PC-9 (cell line): ENCODE measurements at regions of chr1 and their contacts with region 1.

Region 1: DNA sequence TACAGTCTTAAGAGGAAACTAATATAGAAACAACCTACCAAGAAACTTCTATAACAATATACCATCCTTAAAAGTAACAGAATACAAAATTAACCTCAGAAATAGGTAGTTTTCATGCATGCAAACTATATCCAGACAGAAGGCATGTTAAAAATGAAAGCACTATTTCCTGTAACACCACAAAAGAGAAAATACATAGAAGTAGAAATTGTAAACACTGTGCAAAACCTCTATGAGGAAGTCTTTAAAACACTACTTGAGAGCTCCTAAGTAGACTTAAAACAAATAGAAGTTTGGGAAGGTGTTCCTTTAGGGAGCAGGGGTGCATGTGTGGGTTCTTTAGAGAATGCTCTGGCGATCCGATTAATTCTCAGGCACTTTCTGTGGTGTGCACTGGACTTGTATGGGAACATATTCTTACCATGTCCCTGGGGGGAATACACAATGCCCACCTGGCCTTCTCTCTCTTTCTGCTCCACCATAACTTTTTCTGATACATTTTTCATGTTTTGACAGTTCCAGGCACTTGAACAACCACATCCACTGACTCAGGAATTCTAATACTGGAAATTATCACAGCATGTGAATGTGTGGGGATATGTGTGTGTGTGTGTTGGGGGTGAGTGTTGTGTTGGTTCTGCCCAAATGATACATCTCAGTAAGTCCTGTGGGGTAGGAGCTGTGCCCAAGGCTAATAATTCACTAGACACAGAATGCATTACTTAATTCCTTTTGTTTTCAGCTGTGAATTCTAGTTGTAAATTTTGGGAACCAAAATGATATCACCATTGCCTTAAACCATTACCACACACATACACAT is 866.3 kb upstream of the B3GALT2 start:
- DNase-seq: no peak
- H3K4me3 ChIP-seq: no peak overlapping the region
- H3K27ac ChIP-seq: no peak overlapping the region
- H3K4me1 ChIP-seq: no peaks in the 10 kb centered on the region
- H3K27me3 ChIP-seq: no peaks in the 10 kb centered on the region
- CTCF ChIP-seq: no peak

Region 2: GRCh38 chr1:194071205-194071604 is 18.5 kb after region 1 on chr1:
- CTCF ChIA-PET with region 1: no interaction called
- POLR2A ChIA-PET with region 1: interaction called, 11 read pairs
- intact Hi-C with region 1: no loop called
- DNase-seq: no peak
- H3K4me3 ChIP-seq: no peak overlapping the region
- H3K27ac ChIP-seq: no peak overlapping the region
- H3K4me1 ChIP-seq: no peaks in the 10 kb centered on the region
- H3K27me3 ChIP-seq: no peaks in the 10 kb centered on the region
- CTCF ChIP-seq: no peak